Psoas muscle (tissue), 8 donors: ENCODE measurements at regions of chr10 and their contacts with region 1.

Region 1: GRCh38 chr10:80066809-80067208 is 11.7 kb upstream of the TMEM254 start:
- DNase-seq: no peak
- ATAC-seq: no peak
- H3K4me3 ChIP-seq: no peak overlapping the region
- H3K27ac ChIP-seq: no peak overlapping the region
- H3K4me1 ChIP-seq: no peaks in the 10 kb centered on the region
- H3K27me3 ChIP-seq: no peaks in the 10 kb centered on the region
- CTCF ChIP-seq: no peak

Region 2: DNA sequence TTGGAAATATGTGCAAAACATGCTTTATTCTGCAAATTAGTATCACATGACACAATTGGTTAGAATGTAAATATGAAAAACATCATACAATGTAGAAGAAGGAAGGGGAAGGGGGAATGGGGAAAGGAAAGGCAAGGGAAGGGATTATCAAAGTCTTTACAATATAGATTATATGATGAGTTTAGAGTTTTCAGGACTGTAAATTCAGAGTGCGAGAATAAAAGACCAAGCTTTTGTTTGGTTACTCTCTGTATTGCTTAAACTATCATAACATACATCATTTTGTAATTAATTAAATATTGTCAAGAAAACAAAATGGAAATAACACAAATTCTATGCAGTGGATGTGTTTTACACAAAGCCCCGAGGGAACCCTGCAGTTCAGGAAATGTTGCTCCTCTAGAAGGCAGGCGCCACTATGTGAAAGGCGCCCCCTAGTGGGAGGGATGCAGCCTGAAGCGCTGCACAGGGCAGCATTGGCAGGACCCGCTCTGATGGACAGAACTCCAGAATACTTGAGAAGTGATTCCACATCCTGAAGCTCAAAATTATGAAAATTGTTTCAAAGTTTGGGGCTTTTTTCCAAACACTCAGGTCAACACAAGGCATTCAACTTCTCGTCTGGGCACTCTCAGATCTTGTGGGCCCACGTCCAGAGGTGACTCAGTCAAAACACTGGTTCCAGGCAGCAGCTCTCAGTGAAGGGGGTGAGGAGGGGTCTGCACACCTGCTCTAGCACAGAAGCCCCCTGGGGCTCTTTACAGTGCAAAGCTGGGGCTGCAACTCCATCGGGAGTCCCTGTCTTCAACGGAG is 20.0 kb before region 1 on chr10:
- intact Hi-C with region 1: no loop called
- DNase-seq: peak; percentile 70 to 77
- ATAC-seq: peak; percentile 71 to 91 (median 80)
- H3K4me3 ChIP-seq: no peak overlapping the region
- H3K27ac ChIP-seq: no peak overlapping the region
- H3K4me1 ChIP-seq: no peaks in the 10 kb centered on the region
- H3K27me3 ChIP-seq: no peaks in the 10 kb centered on the region
- CTCF ChIP-seq: peak; percentile 86

Region 3: GRCh38 chr10:80090121-80090520 is 23.3 kb after region 1 on chr10:
- intact Hi-C with region 1: loop called in 1 of 2 experiments (anchors 2 kb)
- DNase-seq: no peak
- ATAC-seq: peak in 1 of 4 donors; percentile 22
- H3K4me3 ChIP-seq: no peak overlapping the region
- H3K27ac ChIP-seq: no peak overlapping the region
- H3K4me1 ChIP-seq: no peaks in the 10 kb centered on the region
- H3K27me3 ChIP-seq: no peaks in the 10 kb centered on the region
- CTCF ChIP-seq: no peak